Activated T-helper 1 cell treated with anti-CD3 and anti-CD28 coated beads, Interleukin-12 subunit alpha, Interleukin-12 subunit beta, Interleukin-2, Interleukin-4 antibody, amounts not matched to agents 30 ng/mL and 10 ng/mL and 1 ng/mL, durations not matched to agents 14 hours and 24 hours and 36 hours (primary cell): ENCODE measurements at regions of chr13 and their contacts with region 1.

Region 1: DNA sequence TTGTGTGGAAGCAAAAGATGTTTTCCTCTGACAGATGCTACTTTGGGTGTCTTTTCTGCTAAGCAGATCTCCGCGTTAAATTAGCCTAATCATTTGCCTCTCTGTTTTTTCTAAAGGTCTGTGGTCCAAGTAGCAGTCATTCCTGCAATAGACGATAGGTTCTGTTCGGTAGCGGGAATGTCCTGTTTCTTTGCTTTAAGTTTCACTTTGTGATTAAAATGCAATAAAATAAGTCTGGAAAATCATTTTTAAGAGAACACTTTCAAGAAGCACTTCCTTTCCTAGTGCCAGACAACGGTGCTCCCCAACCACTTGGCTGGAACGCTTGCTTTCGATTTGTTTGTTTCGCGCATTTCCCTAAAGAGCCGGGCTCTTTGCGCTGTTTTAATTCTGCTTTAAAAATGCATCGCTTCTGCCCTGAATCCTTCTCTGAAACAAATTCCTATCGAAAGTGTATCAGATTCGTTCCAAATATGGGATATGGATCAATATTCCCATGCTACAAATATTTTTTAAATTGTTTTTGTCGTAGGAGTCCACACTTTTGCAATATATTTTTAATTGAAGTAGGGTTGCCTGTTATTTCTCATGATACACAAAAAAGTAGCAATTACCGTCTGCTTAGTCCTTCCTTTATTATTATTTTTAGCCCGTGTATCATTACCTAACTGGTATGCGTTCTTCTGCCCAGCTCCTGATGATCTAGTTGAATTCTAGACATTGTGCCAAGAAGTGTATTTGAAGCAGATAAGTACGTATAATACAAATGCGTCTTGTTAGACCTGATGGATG is 14.2 kb downstream of the ZIC2 start:
- DNase-seq: no peak
- H3K4me3 Mint-ChIP-seq: peak overlapping the region; percentile 45
- H3K27ac Mint-ChIP-seq: peak overlapping the region; percentile 44
- H3K4me1 Mint-ChIP-seq: peaks cover 30% of the 10 kb centered on the region
- H3K27me3 Mint-ChIP-seq: peaks cover 74% of the 10 kb centered on the region

Region 2: GRCh38 chr13:99955747-99956472 is 39.9 kb before region 1 on chr13:
- intact Hi-C with region 1: loop called (anchors 2 kb)
- DNase-seq: no peak
- H3K4me3 Mint-ChIP-seq: no peak overlapping the region
- H3K27ac Mint-ChIP-seq: peak overlapping the region; percentile 72
- H3K4me1 Mint-ChIP-seq: peaks cover 5% of the 10 kb centered on the region
- H3K27me3 Mint-ChIP-seq: peaks cover 78% of the 10 kb centered on the region

Region 3: GRCh38 chr13:99984461-99985240 is 11.1 kb before region 1 on chr13:
- intact Hi-C with region 1: loop called (anchors 1 kb)
- DNase-seq: no peak
- H3K4me3 Mint-ChIP-seq: no peak overlapping the region
- H3K27ac Mint-ChIP-seq: peak overlapping the region; percentile 67
- H3K4me1 Mint-ChIP-seq: peaks cover 10% of the 10 kb centered on the region
- H3K27me3 Mint-ChIP-seq: peaks cover 60% of the 10 kb centered on the region

Region 4: GRCh38 chr13:100235311-100235901 is 239.6 kb after region 1 on chr13:
- intact Hi-C with region 1: loop called (anchors 2 kb)
- DNase-seq: no peak
- H3K4me3 Mint-ChIP-seq: no peak overlapping the region
- H3K27ac Mint-ChIP-seq: no peak overlapping the region
- H3K4me1 Mint-ChIP-seq: peaks cover 15% of the 10 kb centered on the region
- H3K27me3 Mint-ChIP-seq: no peaks in the 10 kb centered on the region